PC-9 (cell line): ENCODE measurements at regions of chr5 and their contacts with region 1.

Region 1: DNA sequence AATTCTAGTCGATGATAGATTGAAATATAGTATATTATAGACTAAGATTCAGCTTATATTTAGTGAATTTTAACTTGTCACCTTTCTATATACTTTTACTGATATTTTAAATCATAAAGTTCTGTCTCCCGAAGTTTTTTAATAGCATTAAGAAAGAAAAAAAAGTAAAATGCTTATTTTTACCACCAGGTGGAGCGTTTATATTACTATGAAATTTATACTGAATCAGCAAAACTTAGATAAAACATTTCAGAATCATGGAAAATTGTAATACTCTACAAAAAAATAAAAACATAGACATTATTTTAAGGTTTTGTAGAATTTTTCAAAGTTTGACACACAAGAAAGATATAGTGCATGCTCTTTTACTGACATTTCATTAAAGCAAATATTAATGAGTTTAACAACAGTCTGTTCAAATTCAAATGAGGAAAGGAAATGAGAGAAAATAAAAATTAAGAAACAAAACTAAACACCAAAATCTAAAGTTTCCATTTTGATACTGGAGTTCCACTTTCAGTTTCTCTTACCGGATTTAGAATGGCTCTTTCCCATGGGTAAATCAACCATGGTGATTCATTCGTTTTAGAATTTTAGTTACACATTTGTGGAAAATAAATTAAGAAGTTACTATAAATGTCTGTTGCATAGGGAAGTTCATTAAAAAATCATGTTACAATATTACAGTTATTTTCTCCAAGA is 1035.3 kb downstream of the CDH12 start:
- DNase-seq: no peak
- H3K4me3 ChIP-seq: no peak overlapping the region
- H3K27ac ChIP-seq: no peak overlapping the region
- H3K4me1 ChIP-seq: no peaks in the 10 kb centered on the region
- H3K27me3 ChIP-seq: no peaks in the 10 kb centered on the region
- CTCF ChIP-seq: peak; percentile 72

Region 2: GRCh38 chr5:22223079-22223478 is 405.3 kb after region 1 on chr5:
- CTCF ChIA-PET with region 1: no interaction called
- POLR2A ChIA-PET with region 1: no interaction called
- intact Hi-C with region 1: loop called (anchors 5 kb)
- DNase-seq: no peak
- H3K4me3 ChIP-seq: no peak overlapping the region
- H3K27ac ChIP-seq: no peak overlapping the region
- H3K4me1 ChIP-seq: no peaks in the 10 kb centered on the region
- H3K27me3 ChIP-seq: no peaks in the 10 kb centered on the region
- CTCF ChIP-seq: no peak

Region 3: DNA sequence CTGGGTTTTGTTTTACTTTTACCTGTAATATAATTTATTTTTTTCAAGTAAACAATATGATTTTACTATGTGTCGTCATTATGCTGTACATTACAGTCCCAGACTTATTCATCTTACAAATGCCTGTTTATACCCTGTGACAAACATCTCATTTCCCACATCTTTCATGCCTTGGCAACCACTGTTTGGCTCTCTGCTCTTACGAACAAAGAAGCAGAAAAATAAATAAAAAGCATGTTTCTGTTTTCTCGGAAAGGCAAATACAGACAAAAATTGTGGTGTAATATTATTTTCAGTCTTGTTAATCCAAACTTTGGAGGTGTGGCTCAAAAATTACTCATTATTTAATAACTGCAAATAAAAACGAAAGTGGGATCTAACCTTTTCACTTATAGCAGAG is 642.4 kb after region 1 on chr5:
- CTCF ChIA-PET with region 1: no interaction called
- POLR2A ChIA-PET with region 1: no interaction called
- intact Hi-C with region 1: no loop called
- DNase-seq: no peak
- H3K4me3 ChIP-seq: no peak overlapping the region
- H3K27ac ChIP-seq: no peak overlapping the region
- H3K4me1 ChIP-seq: no peaks in the 10 kb centered on the region
- H3K27me3 ChIP-seq: no peaks in the 10 kb centered on the region
- CTCF ChIP-seq: no peak

Region 4: GRCh38 chr5:23105021-23105420 is 1287.2 kb after region 1 on chr5:
- CTCF ChIA-PET with region 1: interaction called, 13 read pairs
- POLR2A ChIA-PET with region 1: no interaction called
- intact Hi-C with region 1: no loop called
- DNase-seq: no peak
- H3K4me3 ChIP-seq: no peak overlapping the region
- H3K27ac ChIP-seq: no peak overlapping the region
- H3K4me1 ChIP-seq: no peaks in the 10 kb centered on the region
- H3K27me3 ChIP-seq: no peaks in the 10 kb centered on the region
- CTCF ChIP-seq: no peak